ENCODE measurements at regions of chr4 and their contacts with region 1.

Region 1: DNA sequence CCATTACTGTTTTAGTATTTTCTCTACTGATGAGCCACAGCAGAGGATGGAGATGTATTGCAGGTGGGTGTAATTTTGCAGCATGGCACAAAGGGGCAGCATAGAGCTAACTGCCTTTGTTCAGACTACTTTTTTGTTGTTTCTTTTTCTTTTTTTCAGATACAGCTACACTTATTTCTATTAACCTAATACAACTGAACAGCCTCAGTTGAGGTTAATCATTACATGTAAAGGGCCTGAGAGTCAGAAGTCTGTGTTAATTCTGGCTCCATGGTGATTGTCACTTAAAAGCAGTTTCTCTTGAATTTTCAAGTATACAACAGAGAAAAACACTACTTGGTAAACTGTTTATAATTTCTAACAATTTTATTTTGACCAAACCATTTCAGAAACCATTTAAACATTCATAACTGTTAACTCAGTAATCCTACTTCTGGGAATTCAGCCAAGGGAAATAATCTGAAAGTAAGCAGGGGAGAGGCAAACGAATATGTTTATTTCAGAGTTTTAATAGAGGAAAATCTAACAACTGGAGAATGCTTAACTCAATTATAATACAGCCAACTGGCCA is 13.9 kb upstream of the PPEF2 start:
- DNase-seq: no peak
- ATAC-seq: peak; percentile 81
- H3K4me3 Mint-ChIP-seq: no peak overlapping the region
- H3K27ac Mint-ChIP-seq: no peak overlapping the region
- H3K4me1 Mint-ChIP-seq: no peaks in the 10 kb centered on the region
- H3K27me3 Mint-ChIP-seq: no peaks in the 10 kb centered on the region
- CTCF ChIP-seq: peak; percentile 69

Region 2: GRCh38 chr4:75561790-75562189 is 354.4 kb before region 1 on chr4:
- CTCF ChIA-PET with region 1: no interaction called
- POLR2A ChIA-PET with region 1: interaction called, 12 read pairs
- intact Hi-C with region 1: no loop called
- DNase-seq: no peak
- ATAC-seq: no peak
- H3K4me3 Mint-ChIP-seq: no peak overlapping the region
- H3K27ac Mint-ChIP-seq: no peak overlapping the region
- H3K4me1 Mint-ChIP-seq: peaks cover 4% of the 10 kb centered on the region
- H3K27me3 Mint-ChIP-seq: peaks cover 12% of the 10 kb centered on the region
- CTCF ChIP-seq: no peak

Region 3: GRCh38 chr4:75895744-75896314 is 20.3 kb before region 1 on chr4:
- CTCF ChIA-PET with region 1: interaction called, 15 read pairs
- POLR2A ChIA-PET with region 1: no interaction called
- intact Hi-C with region 1: loop called (anchors 2 kb)
- DNase-seq: no peak
- ATAC-seq: peak; percentile 70
- H3K4me3 Mint-ChIP-seq: no peak overlapping the region
- H3K27ac Mint-ChIP-seq: no peak overlapping the region
- H3K4me1 Mint-ChIP-seq: no peaks in the 10 kb centered on the region
- H3K27me3 Mint-ChIP-seq: no peaks in the 10 kb centered on the region
- CTCF ChIP-seq: no peak

Region 4: DNA sequence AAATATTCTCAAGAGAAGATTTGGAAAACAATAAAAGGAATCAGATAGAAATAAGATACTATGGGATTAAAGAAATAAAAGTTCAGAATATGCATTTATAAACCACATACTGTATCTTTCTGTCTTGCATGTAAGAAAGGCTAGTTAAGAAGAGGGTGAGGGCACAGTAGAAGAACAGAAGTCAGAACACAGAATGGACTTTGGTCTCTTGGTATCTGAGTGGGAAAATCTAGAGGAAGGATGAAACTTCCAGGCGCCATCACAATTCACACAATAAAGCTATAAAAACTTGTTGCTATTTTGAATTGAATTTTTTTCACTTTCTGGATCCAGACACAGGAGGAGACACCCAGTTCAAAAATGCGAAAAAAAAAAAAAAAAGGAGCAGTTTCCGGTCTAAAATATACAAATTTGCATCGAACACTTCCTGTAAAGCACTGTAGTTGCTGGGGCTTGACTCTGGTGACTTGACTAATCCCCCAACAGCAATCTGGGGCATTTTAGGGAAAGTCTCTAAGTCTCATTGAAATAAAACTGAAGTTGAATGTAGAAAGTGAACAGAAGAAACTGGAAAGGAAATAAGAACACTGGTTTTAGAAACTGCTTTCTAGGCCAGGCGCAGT is 32.8 kb after region 1 on chr4:
- CTCF ChIA-PET with region 1: interaction called, 3 read pairs
- POLR2A ChIA-PET with region 1: no interaction called
- intact Hi-C with region 1: loop called (anchors 5 kb)
- DNase-seq: no peak
- ATAC-seq: peak; percentile 86
- H3K4me3 Mint-ChIP-seq: no peak overlapping the region
- H3K27ac Mint-ChIP-seq: peak overlapping the region; percentile 77
- H3K4me1 Mint-ChIP-seq: peaks cover 26% of the 10 kb centered on the region
- H3K27me3 Mint-ChIP-seq: no peaks in the 10 kb centered on the region
- CTCF ChIP-seq: no peak

Region 5: DNA sequence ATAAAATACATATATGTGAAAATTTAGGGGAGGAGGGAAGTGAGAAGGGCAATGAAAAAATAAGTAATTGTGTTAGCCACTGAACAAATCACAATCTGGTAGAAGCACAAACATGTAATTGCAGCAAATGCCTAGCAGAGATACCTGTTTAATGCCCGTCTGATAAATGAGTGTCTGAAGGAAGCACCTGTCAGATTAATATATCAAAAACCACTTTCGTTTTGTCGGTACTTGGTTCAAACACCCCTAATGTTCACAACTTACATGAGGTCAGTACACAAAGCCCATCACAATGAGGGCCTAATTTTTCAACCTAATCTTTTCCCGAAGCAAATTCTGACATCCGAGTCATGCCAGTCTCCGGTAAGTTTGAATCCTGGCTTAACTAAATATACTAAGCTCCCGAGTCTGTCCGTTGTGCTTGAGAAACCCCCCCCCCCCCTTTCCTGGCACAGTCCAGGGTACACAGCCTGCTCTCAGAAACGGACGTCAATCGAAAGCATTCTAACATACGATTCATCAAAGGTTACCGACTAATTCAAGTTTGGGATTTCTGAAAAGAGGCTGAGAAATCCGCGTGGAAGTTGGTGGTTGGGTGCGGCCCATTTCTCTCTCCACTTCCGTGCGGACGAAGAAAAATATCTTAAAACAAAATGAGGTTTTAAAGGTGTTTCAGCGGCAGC is 73.8 kb after region 1 on chr4:
- CTCF ChIA-PET with region 1: no interaction called
- POLR2A ChIA-PET with region 1: no interaction called
- intact Hi-C with region 1: loop called (anchors 1 kb)
- DNase-seq: no peak
- ATAC-seq: no peak
- H3K4me3 Mint-ChIP-seq: peak overlapping the region; percentile 95
- H3K27ac Mint-ChIP-seq: peak overlapping the region; percentile 86
- H3K4me1 Mint-ChIP-seq: peaks cover 34% of the 10 kb centered on the region
- H3K27me3 Mint-ChIP-seq: peaks cover 2% of the 10 kb centered on the region
- CTCF ChIP-seq: no peak

Region 6: GRCh38 chr4:76067652-76068286 is 151.6 kb after region 1 on chr4:
- CTCF ChIA-PET with region 1: interaction called, 5 read pairs
- POLR2A ChIA-PET with region 1: no interaction called
- intact Hi-C with region 1: loop called (anchors 1 kb)
- DNase-seq: peak; percentile 25
- ATAC-seq: peak; percentile 87
- H3K4me3 Mint-ChIP-seq: no peak overlapping the region
- H3K27ac Mint-ChIP-seq: no peak overlapping the region
- H3K4me1 Mint-ChIP-seq: peaks cover 3% of the 10 kb centered on the region
- H3K27me3 Mint-ChIP-seq: no peaks in the 10 kb centered on the region
- CTCF ChIP-seq: no peak

Region 7: GRCh38 chr4:76733068-76733771 is 817.0 kb after region 1 on chr4:
- CTCF ChIA-PET with region 1: no interaction called
- POLR2A ChIA-PET with region 1: no interaction called
- intact Hi-C with region 1: no loop called
- DNase-seq: no peak
- ATAC-seq: no peak
- H3K4me3 Mint-ChIP-seq: no peak overlapping the region
- H3K27ac Mint-ChIP-seq: no peak overlapping the region
- H3K4me1 Mint-ChIP-seq: no peaks in the 10 kb centered on the region
- H3K27me3 Mint-ChIP-seq: no peaks in the 10 kb centered on the region
- CTCF ChIP-seq: no peak

Region 8: GRCh38 chr4:77734928-77735327 is 1818.8 kb after region 1 on chr4:
- CTCF ChIA-PET with region 1: no interaction called
- POLR2A ChIA-PET with region 1: no interaction called
- intact Hi-C with region 1: no loop called
- DNase-seq: no peak
- ATAC-seq: peak; percentile 71
- H3K4me3 Mint-ChIP-seq: no peak overlapping the region
- H3K27ac Mint-ChIP-seq: peak overlapping the region; percentile 57
- H3K4me1 Mint-ChIP-seq: peaks cover 42% of the 10 kb centered on the region
- H3K27me3 Mint-ChIP-seq: no peaks in the 10 kb centered on the region
- CTCF ChIP-seq: no peak

Measured in activated B cell treated with CpG ODN at 0.5 μM for 24 hours (primary cell).